OCI-LY7 (cell line): ENCODE measurements at regions of chr6 and their contacts with region 1.

Region 1: DNA sequence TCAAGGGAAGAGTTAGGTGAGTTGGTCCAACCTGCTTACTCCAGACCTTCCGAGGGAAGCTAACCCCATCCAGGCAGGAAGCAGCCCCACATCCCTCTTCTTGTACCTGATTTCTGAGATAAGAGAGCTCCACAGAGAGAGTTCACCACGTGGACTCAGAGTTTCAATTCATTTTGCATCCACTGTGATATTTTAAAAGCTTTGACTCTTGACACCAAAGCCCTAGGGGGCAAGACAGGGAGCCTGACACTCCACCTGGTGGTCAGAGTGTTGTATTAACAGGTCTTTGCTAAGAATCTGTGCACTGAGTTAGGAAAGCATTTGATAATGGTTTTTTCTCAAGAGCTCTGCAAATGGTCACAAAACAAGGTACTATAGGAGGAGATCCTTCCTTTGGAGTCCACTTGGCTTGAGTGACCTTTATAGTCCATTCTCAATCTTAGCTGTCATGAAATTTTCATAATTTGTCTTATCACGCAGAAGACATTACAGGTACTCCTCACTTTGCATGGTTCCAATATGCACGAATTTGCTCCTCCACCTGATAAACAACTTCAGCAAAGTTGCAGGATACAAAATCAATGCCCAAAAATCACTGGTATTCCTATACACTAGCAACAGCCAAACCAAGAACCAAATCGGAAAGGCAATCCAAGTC is 56.2 kb upstream of the RIPOR2 start:
- DNase-seq: peak; percentile 91
- H3K4me3 ChIP-seq: no peak overlapping the region
- H3K27ac ChIP-seq: no peak overlapping the region
- H3K4me1 ChIP-seq: peaks cover 19% of the 10 kb centered on the region
- CTCF ChIP-seq: peak; percentile 96

Region 2: GRCh38 chr6:24910961-24911712 is 80.8 kb before region 1 on chr6:
- CTCF ChIA-PET with region 1: interaction called, 19 read pairs
- POLR2A ChIA-PET with region 1: interaction called, 26 read pairs
- intact Hi-C with region 1: loop called (anchors 1 kb)
- DNase-seq: peak; percentile 62
- H3K4me3 ChIP-seq: peak overlapping the region; percentile 75
- H3K27ac ChIP-seq: peak overlapping the region; percentile 95
- H3K4me1 ChIP-seq: peaks cover 75% of the 10 kb centered on the region
- CTCF ChIP-seq: no peak

Region 3: GRCh38 chr6:24919004-24919892 is 72.7 kb before region 1 on chr6:
- CTCF ChIA-PET with region 1: interaction called, 11 read pairs
- POLR2A ChIA-PET with region 1: interaction called, 4 read pairs
- intact Hi-C with region 1: no loop called
- DNase-seq: peak; percentile 96
- H3K4me3 ChIP-seq: peak overlapping the region; percentile 61
- H3K27ac ChIP-seq: peak overlapping the region; percentile 88
- H3K4me1 ChIP-seq: peaks cover 66% of the 10 kb centered on the region
- CTCF ChIP-seq: no peak; the same call in 1 of the 2 replicates

Region 4: DNA sequence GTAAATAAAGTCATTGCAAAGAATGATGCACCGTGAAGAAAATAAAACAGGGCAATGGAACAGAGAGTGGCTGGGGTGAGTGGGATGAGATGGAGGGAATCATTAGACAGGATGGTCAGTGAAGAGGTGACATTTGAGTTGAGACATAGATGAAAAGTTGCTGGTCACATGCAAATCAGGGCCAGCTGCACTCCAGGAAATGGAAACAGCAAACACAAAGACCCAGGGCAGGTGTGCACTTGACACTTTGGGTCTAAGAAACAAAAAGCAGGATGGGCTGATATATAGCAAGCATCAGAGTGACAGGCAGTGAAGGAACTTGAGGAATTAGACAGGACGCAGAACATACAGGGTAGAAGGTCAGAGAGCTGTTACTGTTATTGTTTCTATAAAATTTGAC is 115.3 kb after region 1 on chr6:
- CTCF ChIA-PET with region 1: no interaction called
- POLR2A ChIA-PET with region 1: no interaction called
- intact Hi-C with region 1: no loop called
- DNase-seq: peak; percentile 82
- H3K4me3 ChIP-seq: no peak overlapping the region
- H3K27ac ChIP-seq: no peak overlapping the region
- H3K4me1 ChIP-seq: peaks cover 18% of the 10 kb centered on the region
- CTCF ChIP-seq: no peak